PC-9 (cell line): ENCODE measurements at regions of chr11 and their contacts with region 1.

Region 1: DNA sequence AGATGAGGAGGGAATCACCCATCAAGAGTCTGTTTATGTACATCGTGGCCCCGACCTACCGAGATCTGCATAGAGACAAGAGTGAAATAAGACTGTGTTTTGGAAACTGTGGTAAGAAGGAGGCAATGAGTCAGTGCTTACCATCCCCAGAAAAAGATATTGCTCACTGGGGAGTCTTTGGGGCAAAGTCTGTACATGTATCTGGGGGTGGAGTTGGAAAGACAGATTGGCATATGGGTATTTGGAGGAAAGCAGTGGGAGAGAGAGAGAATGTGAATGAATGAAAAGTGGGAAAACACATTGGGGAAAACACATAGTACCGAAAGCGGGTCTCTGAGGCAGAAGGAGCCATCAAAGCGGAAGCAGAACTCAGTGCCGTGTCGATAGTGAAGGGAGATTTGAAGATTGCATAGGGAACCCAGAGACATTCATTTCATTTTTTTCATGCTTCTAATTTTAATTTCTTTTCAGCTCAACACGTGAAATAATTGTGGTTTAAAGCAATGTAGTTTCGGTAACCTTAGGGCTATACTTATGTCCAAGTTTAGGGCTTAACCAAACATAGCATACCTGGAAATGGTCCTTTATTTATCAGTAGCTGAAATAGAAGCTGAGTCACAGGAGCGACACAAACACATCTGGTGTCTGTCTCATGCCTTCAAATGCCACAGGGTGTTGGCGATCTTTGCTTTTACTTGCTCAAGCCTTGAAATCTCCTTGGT is 98.6 kb upstream of the CD44 start:
- DNase-seq: peak; percentile 53 to 96
- H3K4me3 ChIP-seq: peak overlapping the region; percentile 55
- H3K27ac ChIP-seq: peak overlapping the region; percentile 87
- H3K4me1 ChIP-seq: peaks cover 65% of the 10 kb centered on the region
- H3K27me3 ChIP-seq: no peaks in the 10 kb centered on the region
- CTCF ChIP-seq: no peak

Region 2: GRCh38 chr11:34977089-34977906 is 63.1 kb before region 1 on chr11:
- CTCF ChIA-PET with region 1: no interaction called
- POLR2A ChIA-PET with region 1: no interaction called
- intact Hi-C with region 1: loop called (anchors 1 kb)
- DNase-seq: peak in 1 of 2 experiments; percentile 99
- H3K4me3 ChIP-seq: peak overlapping the region; percentile 22; the same call in 1 of the 2 replicates
- H3K27ac ChIP-seq: peak overlapping the region; percentile 77
- H3K4me1 ChIP-seq: peaks cover 58% of the 10 kb centered on the region
- H3K27me3 ChIP-seq: no peaks in the 10 kb centered on the region
- CTCF ChIP-seq: no peak

Region 3: GRCh38 chr11:35111161-35112055 is 71.0 kb after region 1 on chr11:
- CTCF ChIA-PET with region 1: no interaction called
- POLR2A ChIA-PET with region 1: interaction called, 6 read pairs
- intact Hi-C with region 1: loop called (anchors 2 kb)
- DNase-seq: peak; percentile 87 to 88
- H3K4me3 ChIP-seq: no peak overlapping the region
- H3K27ac ChIP-seq: peak overlapping the region; percentile 82
- H3K4me1 ChIP-seq: peaks cover 43% of the 10 kb centered on the region
- H3K27me3 ChIP-seq: no peaks in the 10 kb centered on the region
- CTCF ChIP-seq: no peak

Region 4: GRCh38 chr11:35116762-35117640 is 76.6 kb after region 1 on chr11:
- CTCF ChIA-PET with region 1: no interaction called
- POLR2A ChIA-PET with region 1: interaction called, 6 read pairs
- intact Hi-C with region 1: loop called (anchors 1 kb)
- DNase-seq: no peak
- H3K4me3 ChIP-seq: no peak overlapping the region
- H3K27ac ChIP-seq: no peak overlapping the region
- H3K4me1 ChIP-seq: peaks cover 26% of the 10 kb centered on the region
- H3K27me3 ChIP-seq: no peaks in the 10 kb centered on the region
- CTCF ChIP-seq: no peak

Region 5: GRCh38 chr11:35138943-35139721 is 98.8 kb after region 1 on chr11 and contains the start of gene CD44:
- CTCF ChIA-PET with region 1: interaction called, 3 read pairs
- POLR2A ChIA-PET with region 1: no interaction called
- intact Hi-C with region 1: loop called (anchors 2 kb)
- DNase-seq: peak; percentile 72 to 84
- H3K4me3 ChIP-seq: peak within 1 kb of the TSS; percentile 70
- H3K27ac ChIP-seq: peak within 1 kb of the TSS; percentile 91
- H3K4me1 ChIP-seq: peaks cover 66% of the 10 kb centered on the region
- H3K27me3 ChIP-seq: no peaks in the 10 kb centered on the region
- CTCF ChIP-seq: no peak
- total RNA-seq, gene CD44: 775 and 872 TPM in 2 replicates

Region 6: DNA sequence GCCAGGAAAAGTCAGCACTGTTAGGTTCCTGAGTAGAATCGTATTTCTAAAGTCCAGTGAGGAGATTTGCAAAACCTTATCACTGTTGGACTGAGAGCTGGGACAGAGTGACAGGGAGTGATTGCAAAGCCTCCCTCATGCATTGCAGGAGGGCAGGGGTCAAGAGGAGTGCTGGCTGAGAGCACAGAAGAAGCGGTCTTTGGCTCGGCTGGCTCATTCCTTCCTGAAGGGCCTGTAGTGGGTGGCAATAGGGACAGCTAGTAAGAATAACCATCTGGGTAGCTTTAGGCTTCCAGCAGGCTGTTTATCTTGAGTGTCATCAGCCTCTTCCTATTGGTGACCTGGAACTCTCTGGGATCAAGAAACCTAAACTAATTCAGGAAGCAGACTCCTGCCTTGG is 152.0 kb after region 1 on chr11:
- CTCF ChIA-PET with region 1: no interaction called
- POLR2A ChIA-PET with region 1: interaction called, 11 read pairs
- intact Hi-C with region 1: no loop called
- DNase-seq: no peak
- H3K4me3 ChIP-seq: no peak overlapping the region
- H3K27ac ChIP-seq: peak overlapping the region; percentile 6; the same call in 1 of the 2 replicates
- H3K4me1 ChIP-seq: no peaks in the 10 kb centered on the region
- H3K27me3 ChIP-seq: no peaks in the 10 kb centered on the region
- CTCF ChIP-seq: no peak